Cardiac septum (tissue), 1 donor: ENCODE measurements at regions of chr4 and their contacts with region 1.

Region 1: GRCh38 chr4:1167247-1167949 is 5.0 kb downstream of the SPON2 start:
- DNase-seq: peak; percentile 91

Region 2: GRCh38 chr4:1233641-1234308 is 66.4 kb after region 1 on chr4:
- intact Hi-C with region 1: loop called (anchors 2 kb)
- DNase-seq: no peak

Region 3: DNA sequence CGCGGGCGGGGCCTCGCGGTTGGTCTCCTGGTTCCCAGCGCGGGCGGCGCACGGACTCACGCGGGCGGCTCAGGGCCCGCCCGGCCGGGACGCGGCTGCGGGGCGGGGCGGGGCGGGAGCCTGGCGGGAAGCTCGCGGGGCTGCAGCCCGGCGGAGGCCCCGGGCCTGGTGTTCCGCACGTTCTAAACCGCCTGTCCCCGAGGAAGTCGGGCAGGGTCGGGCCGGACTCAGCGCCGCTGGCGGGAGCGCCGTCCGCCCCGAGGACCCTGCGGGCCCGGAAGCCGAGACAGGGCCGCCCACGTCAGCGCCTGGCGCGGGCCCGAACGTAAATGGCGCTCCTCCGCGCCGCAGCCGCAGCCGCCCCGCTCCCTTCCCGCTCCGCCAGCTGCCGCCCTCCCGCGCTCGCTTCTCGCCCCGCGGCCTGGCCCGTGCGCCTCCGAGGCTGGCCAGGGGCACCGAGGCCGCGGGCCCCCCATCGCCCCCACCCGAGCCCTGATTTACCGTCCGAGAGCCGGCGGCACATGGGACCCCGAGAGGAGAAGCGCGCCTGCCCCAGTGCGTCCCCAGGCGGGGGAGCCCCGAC is 81.8 kb after region 1 on chr4:
- intact Hi-C with region 1: loop called (anchors 5 kb)
- DNase-seq: peak; percentile 92

Region 4: GRCh38 chr4:1269209-1269608 is 101.8 kb after region 1 on chr4:
- intact Hi-C with region 1: loop called (anchors 2 kb)
- DNase-seq: no peak